Natural killer cell (primary cell): ENCODE measurements at regions of chr22 and their contacts with region 1.

Region 1: GRCh38 chr22:44697423-44698141 is 4.4 kb upstream of the PRR5 start:
- DNase-seq: peak; percentile 88 to 92
- ATAC-seq: peak; percentile 37 to 61 (median 42)
- H3K4me3 ChIP-seq: no peak overlapping the region
- H3K4me3 Mint-ChIP-seq: peak overlapping the region; percentile 40
- H3K27ac ChIP-seq: peak overlapping the region; percentile 63
- H3K27ac Mint-ChIP-seq: peak overlapping the region; percentile 72 to 89
- H3K4me1 ChIP-seq: peaks cover 43% of the 10 kb centered on the region
- H3K4me1 Mint-ChIP-seq: peaks cover 32 to 53% of the 10 kb centered on the region in 2 donors
- H3K27me3 ChIP-seq: no peaks in the 10 kb centered on the region
- H3K27me3 Mint-ChIP-seq: no peaks in the 10 kb centered on the region
- CTCF ChIP-seq: peak; percentile 98

Region 2: GRCh38 chr22:44583061-44583760 is 114.4 kb before region 1 on chr22:
- intact Hi-C with region 1: no loop called
- DNase-seq: peak in 1 of 2 donors; percentile 4
- ATAC-seq: no peak
- H3K4me3 ChIP-seq: no peak overlapping the region
- H3K4me3 Mint-ChIP-seq: no peak overlapping the region
- H3K27ac ChIP-seq: no peak overlapping the region
- H3K27ac Mint-ChIP-seq: no peak overlapping the region
- H3K4me1 ChIP-seq: peaks cover 5% of the 10 kb centered on the region
- H3K4me1 Mint-ChIP-seq: peaks cover 5 to 6% of the 10 kb centered on the region in 2 donors
- H3K27me3 ChIP-seq: no peaks in the 10 kb centered on the region
- H3K27me3 Mint-ChIP-seq: peaks cover 41 to 59% of the 10 kb centered on the region in 2 donors
- CTCF ChIP-seq: no peak

Region 3: DNA sequence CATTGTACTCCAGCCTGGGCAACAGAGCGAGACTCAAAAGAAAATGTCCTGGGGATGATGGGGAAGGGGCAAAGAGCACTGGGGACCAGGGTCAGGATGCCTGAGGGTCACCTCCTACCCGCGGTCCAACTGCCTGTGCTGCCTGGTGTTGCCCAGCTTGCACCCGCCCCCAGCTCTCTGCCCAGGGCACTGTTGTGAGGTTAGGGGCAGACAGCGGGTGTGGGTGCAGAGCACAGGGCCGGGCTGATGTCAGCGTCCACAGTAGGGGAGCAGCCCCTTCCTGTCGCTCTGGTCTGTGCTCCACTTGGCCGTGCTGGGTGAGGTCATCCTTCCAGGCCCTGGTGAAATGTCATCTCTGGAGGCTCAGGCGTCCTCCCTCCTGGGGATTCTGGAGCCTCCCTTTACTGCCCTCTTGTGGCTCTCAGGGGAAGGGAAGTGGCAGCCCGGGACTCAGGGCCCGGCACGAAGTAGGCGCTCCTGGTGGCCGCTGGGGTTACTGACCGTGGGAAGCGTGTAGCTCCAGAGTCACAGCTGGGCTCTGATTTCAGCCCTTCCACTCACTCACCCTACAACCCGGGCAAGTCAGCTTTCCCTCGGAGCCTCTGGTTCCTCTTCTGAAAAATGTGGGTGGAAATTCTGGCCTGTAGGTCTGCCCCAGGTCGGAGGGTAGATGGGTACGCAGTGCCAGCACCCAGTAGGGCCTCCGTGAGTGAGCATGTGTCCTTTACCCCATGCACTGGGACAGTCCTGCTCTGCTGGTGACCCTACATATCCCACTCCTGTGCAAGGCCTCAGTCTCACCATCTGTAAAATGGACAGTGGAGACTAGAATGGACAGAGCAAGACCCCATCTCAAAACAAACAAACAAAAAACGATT is 12.8 kb before region 1 on chr22:
- intact Hi-C with region 1: loop called (anchors 2 kb)
- DNase-seq: peak; percentile 80 to 93
- ATAC-seq: peak; percentile 85 to 93 (median 88)
- H3K4me3 ChIP-seq: no peak overlapping the region
- H3K4me3 Mint-ChIP-seq: peak overlapping the region; percentile 76
- H3K27ac ChIP-seq: peak overlapping the region; percentile 71
- H3K27ac Mint-ChIP-seq: peak overlapping the region; percentile 81 to 84
- H3K4me1 ChIP-seq: peaks cover 59% of the 10 kb centered on the region
- H3K4me1 Mint-ChIP-seq: peaks cover 47 to 75% of the 10 kb centered on the region in 2 donors
- H3K27me3 ChIP-seq: no peaks in the 10 kb centered on the region
- H3K27me3 Mint-ChIP-seq: no peaks in the 10 kb centered on the region
- CTCF ChIP-seq: peak; percentile 99

Region 4: DNA sequence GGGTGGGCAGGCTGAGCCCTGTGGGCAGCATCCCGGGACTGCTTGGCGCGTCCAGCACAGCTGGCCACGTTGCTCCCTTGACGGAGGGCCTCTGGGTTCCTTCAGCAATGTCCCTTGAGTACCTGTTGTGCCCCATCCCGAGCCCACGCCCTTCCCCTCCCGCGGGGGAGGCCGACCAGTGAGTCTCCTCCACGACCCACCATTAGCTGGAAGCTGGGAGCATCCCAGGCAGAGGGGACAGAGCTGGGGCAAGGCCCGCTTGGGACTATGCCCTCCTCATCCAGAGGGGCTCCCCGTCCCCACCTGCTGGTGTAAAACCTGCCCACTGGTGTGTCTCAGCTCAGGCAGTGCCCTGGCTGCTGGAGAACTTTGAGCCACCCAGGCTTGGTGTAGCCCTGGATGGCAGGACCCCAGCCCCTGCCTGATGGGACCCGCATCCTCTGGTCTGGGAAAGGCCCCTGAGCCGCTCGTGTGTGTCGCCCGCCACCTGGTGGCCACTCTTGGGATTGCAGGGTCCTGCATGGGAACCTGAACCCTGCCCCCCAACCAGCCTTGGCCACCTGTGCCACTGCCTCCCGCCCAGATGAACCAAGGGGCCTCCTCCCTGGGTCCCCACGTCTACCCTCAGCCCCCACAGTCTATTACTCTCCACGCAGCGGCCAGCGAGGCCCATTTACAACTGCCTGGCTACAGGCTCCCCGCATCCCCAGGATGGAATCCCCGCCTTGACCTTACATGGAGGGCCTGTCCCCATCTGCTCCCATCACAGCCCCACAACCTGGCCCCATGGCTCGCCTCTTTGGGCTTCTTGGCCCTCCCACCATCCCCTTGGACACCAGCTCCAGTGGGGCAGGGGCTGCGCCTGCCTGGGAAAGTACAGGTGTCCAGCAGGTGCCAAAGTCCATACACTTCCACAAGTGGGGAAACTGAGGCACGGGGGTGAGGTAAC is 38.2 kb after region 1 on chr22:
- intact Hi-C with region 1: loop called (anchors 1 kb)
- DNase-seq: peak; percentile 85 to 87
- ATAC-seq: peak; percentile 70 to 90 (median 79)
- H3K4me3 ChIP-seq: no peak overlapping the region
- H3K4me3 Mint-ChIP-seq: no peak overlapping the region
- H3K27ac ChIP-seq: peak overlapping the region; percentile 8
- H3K27ac Mint-ChIP-seq: peak overlapping the region; percentile 64 to 78
- H3K4me1 ChIP-seq: peaks cover 12% of the 10 kb centered on the region
- H3K4me1 Mint-ChIP-seq: peaks cover 5 to 8% of the 10 kb centered on the region in 2 donors
- H3K27me3 ChIP-seq: no peaks in the 10 kb centered on the region
- H3K27me3 Mint-ChIP-seq: no peaks in the 10 kb centered on the region
- CTCF ChIP-seq: peak; percentile 95

Region 5: GRCh38 chr22:45096256-45096907 is 398.8 kb after region 1 on chr22:
- intact Hi-C with region 1: loop called (anchors 5 kb)
- DNase-seq: peak in 1 of 2 donors; percentile 59
- ATAC-seq: peak in 2 of 3 donors; percentile 48 to 67
- H3K4me3 ChIP-seq: no peak overlapping the region
- H3K4me3 Mint-ChIP-seq: no peak overlapping the region
- H3K27ac ChIP-seq: no peak overlapping the region
- H3K27ac Mint-ChIP-seq: no peak overlapping the region
- H3K4me1 ChIP-seq: no peaks in the 10 kb centered on the region
- H3K4me1 Mint-ChIP-seq: no peaks in the 10 kb centered on the region
- H3K27me3 ChIP-seq: no peaks in the 10 kb centered on the region
- H3K27me3 Mint-ChIP-seq: peaks cover 11 to 22% of the 10 kb centered on the region in 2 donors
- CTCF ChIP-seq: peak; percentile 67